ENCODE measurements at regions of chr2 and their contacts with region 1.

Region 1: GRCh38 chr2:207166039-207166348 is 246 bp upstream of the KLF7 start:
- DNase-seq: peak; percentile 99
- H3K4me3 Mint-ChIP-seq: peak overlapping the region; percentile 90
- H3K27ac Mint-ChIP-seq: peak overlapping the region; percentile 99
- H3K4me1 Mint-ChIP-seq: peaks cover 44% of the 10 kb centered on the region
- H3K27me3 Mint-ChIP-seq: no peaks in the 10 kb centered on the region
- CTCF ChIP-seq: no peak

Region 2: DNA sequence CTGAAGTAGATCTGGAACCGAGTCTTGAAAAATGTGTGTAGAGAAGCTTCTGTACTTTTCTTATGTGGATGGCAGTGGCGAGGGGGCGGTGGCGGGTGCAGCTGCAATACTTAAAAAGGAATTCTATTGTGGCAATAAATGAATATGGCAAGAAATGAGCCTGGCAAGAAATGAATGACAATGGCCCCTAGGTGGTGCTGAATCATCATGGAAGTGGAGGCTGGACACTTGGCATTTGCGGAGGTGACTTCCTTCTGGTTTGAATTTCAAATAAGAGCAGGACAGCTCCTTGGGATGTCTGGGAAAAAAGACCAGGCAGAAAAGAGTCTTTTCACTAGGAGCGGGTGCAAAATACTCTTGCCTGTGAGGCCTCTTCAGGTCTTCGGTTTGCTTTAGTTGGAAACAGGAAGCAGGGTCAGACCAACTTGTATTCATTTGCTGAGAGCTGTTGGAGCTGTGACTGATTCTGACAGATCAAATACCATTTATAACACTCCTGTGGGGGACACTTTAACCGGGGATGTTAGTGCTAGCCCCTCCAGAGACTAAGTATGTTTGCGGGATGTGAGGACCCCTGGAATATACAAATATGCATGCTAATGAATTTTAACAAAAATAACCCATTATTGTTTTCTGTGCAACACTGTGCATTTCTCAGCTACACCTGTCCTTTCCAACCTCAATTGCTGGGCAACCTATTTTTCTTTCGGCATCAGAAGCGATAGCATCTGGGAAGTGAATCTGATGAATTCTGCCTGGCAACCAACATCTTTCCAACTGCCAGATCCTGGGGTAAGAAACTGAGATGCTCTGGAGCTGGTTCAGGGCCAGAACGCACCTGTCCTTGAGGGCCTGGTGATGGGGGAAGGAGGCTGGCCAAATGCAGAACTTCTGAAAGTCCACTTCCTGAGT is 365.2 kb before region 1 on chr2:
- CTCF ChIA-PET with region 1: interaction called, 3 read pairs
- POLR2A ChIA-PET with region 1: interaction called, 3 read pairs
- intact Hi-C with region 1: loop called (anchors 1 kb)
- DNase-seq: peak; percentile 84
- H3K4me3 Mint-ChIP-seq: no peak overlapping the region
- H3K27ac Mint-ChIP-seq: no peak overlapping the region
- H3K4me1 Mint-ChIP-seq: no peaks in the 10 kb centered on the region
- H3K27me3 Mint-ChIP-seq: no peaks in the 10 kb centered on the region
- CTCF ChIP-seq: peak; percentile 76

Region 3: GRCh38 chr2:207037896-207038295 is 128.1 kb before region 1 on chr2:
- CTCF ChIA-PET with region 1: no interaction called
- POLR2A ChIA-PET with region 1: no interaction called
- intact Hi-C with region 1: no loop called
- DNase-seq: no peak
- H3K4me3 Mint-ChIP-seq: no peak overlapping the region
- H3K27ac Mint-ChIP-seq: no peak overlapping the region
- H3K4me1 Mint-ChIP-seq: peaks cover 11% of the 10 kb centered on the region
- H3K27me3 Mint-ChIP-seq: no peaks in the 10 kb centered on the region
- CTCF ChIP-seq: no peak

Region 4: GRCh38 chr2:207128867-207129266 is 37.1 kb before region 1 on chr2:
- CTCF ChIA-PET with region 1: interaction called, 3 read pairs
- POLR2A ChIA-PET with region 1: interaction called, 61 read pairs
- intact Hi-C with region 1: no loop called
- DNase-seq: peak; percentile 26
- H3K4me3 Mint-ChIP-seq: no peak overlapping the region
- H3K27ac Mint-ChIP-seq: no peak overlapping the region
- H3K4me1 Mint-ChIP-seq: peaks cover 45% of the 10 kb centered on the region
- H3K27me3 Mint-ChIP-seq: no peaks in the 10 kb centered on the region
- CTCF ChIP-seq: no peak

Region 5: GRCh38 chr2:207176247-207176646 is 10.3 kb after region 1 on chr2:
- CTCF ChIA-PET with region 1: interaction called, 4 read pairs
- POLR2A ChIA-PET with region 1: interaction called, 11 read pairs
- intact Hi-C with region 1: no loop called
- DNase-seq: no peak
- H3K4me3 Mint-ChIP-seq: no peak overlapping the region
- H3K27ac Mint-ChIP-seq: no peak overlapping the region
- H3K4me1 Mint-ChIP-seq: no peaks in the 10 kb centered on the region
- H3K27me3 Mint-ChIP-seq: no peaks in the 10 kb centered on the region
- CTCF ChIP-seq: no peak

Region 6: GRCh38 chr2:207248702-207249377 is 82.8 kb after region 1 on chr2:
- CTCF ChIA-PET with region 1: interaction called, 5 read pairs
- POLR2A ChIA-PET with region 1: interaction called, 158 read pairs
- intact Hi-C with region 1: loop called (anchors 1 kb)
- DNase-seq: peak; percentile 69
- H3K4me3 Mint-ChIP-seq: no peak overlapping the region
- H3K27ac Mint-ChIP-seq: peak overlapping the region; percentile 57
- H3K4me1 Mint-ChIP-seq: peaks cover 57% of the 10 kb centered on the region
- H3K27me3 Mint-ChIP-seq: no peaks in the 10 kb centered on the region
- CTCF ChIP-seq: no peak

Region 7: GRCh38 chr2:207394812-207395534 is 229.0 kb after region 1 on chr2:
- CTCF ChIA-PET with region 1: no interaction called
- POLR2A ChIA-PET with region 1: interaction called, 4 read pairs
- intact Hi-C with region 1: loop called (anchors 1 kb)
- DNase-seq: peak; percentile 97
- H3K4me3 Mint-ChIP-seq: no peak overlapping the region
- H3K27ac Mint-ChIP-seq: peak overlapping the region; percentile 85
- H3K4me1 Mint-ChIP-seq: peaks cover 27% of the 10 kb centered on the region
- H3K27me3 Mint-ChIP-seq: no peaks in the 10 kb centered on the region
- CTCF ChIP-seq: no peak

Region 8: DNA sequence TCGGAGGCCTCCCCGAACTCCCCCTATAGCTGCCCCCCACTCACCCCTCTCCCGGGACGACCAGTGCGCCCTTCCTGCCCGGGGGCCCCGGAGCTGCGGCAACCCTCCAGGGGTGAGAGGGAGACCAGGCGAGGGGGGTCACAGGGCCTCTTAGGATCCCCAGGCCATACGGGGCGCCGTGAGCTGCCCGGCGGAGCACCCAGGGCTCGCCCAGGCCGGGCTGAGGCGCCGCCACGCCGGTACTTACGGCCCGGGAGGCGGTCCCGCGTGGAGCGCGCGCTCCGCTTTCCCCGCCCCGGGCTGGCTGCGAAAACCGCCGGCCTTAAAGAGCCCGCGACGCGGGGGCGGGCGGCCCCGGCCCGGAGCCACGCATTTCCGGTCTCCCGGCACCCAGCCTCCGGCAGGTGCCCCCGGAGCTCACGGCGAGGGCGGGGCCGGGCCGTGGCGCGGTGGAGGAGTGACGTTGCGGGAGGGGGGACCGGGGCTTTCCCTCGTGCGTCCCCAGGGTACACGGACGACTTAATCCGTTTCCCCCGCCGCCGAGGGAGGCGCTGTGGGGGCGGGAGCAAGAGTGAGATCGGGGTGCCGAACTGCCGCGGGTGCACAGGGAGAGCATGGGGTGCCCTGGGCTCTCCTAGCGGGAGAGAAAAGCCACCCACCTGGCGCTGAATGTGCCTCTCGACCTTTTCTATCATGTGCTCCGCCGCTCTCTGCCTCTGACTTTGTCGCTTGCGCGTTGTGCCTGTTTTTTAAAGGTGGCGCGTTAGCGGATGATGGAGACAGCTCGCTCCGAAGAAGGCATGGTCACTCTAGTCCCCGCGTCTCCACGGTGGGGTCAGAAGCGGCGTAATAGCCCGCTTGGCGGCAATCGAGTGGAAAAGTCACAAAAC is 459.3 kb after region 1 on chr2 and contains the start of gene METTL21A:
- CTCF ChIA-PET with region 1: no interaction called
- POLR2A ChIA-PET with region 1: interaction called, 3 read pairs
- intact Hi-C with region 1: loop called (anchors 10 kb)
- DNase-seq: peak; percentile 85
- H3K4me3 Mint-ChIP-seq: peak within 1 kb of the TSS; percentile 86
- H3K27ac Mint-ChIP-seq: peak within 1 kb of the TSS; percentile 74
- H3K4me1 Mint-ChIP-seq: peaks cover 25% of the 10 kb centered on the region
- H3K27me3 Mint-ChIP-seq: no peaks in the 10 kb centered on the region
- CTCF ChIP-seq: peak; percentile 25
- total RNA-seq, gene METTL21A: 8.4 and 13.5 TPM in 2 replicates

Measured in MCF 10A (cell line).